Activated CD4-positive, alpha-beta memory T cell treated with anti-CD3 and anti-CD28 coated beads, Interleukin-2, amount 10 ng/mL, durations not matched to agents 7 days and 5 days (primary cell): ENCODE measurements at regions of chr16 and their contacts with region 1.

Region 1: DNA sequence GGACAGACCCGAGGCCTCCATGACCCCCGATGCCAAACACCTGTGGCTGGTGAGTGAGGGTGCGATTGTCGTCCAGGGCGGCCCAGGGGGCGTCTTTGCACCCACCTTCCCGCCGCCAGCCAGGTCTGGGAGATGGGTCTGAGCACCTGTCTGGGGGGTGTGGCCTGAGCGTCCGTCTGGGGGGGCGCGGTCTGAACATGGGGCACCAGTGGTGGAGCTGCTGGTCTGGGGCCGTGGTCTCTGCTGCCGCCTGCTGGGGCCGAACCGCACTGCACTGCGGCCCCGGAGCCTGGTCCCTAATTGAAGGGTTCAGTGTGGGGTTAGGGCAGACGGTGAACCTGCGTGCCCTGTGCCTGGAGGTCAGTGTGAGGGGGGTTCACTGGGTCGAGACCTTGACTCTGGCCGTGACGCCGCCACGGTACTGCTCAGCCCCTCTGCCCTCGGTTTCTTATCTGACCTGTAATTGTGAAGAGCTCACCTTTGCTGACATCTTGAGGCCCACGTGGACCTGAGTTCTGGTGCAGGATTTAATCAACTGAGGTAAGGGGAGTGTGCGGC is 12.6 kb upstream of the TCF25 start:
- DNase-seq: peak; percentile 79
- H3K4me3 Mint-ChIP-seq: no peak overlapping the region
- H3K27ac Mint-ChIP-seq: peak overlapping the region; percentile 0
- H3K4me1 Mint-ChIP-seq: peaks cover 34% of the 10 kb centered on the region
- H3K27me3 Mint-ChIP-seq: no peaks in the 10 kb centered on the region

Region 2: DNA sequence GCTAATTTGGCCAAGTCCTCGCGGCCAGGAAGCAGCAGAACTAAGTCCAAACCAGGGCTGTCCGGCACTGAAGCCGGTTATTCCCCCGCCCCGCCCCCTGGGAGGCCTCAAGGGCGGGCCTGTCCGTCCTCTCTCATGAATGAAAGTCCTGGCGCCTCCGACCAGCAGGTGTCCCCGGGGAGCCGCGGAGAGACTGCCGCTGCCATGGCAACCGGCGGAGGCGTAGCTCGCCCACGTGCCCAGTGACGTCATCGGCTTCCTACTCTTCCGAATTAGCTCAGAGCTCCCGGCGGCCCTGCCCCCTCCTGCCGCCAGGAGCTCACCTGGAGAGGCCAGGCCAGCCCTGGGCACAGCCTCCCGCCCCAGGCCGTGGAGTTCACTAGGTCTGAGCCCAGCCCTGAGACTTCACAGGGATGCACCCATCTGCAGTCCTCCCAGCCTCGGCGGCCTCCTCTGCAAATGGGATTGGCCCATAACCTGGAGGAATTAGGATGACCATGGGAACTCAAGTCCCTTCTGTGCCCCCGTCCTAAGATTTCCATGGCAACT is 160.7 kb before region 1 on chr16:
- CTCF ChIA-PET with region 1: interaction called, 72 read pairs
- POLR2A ChIA-PET with region 1: interaction called, 10 read pairs
- DNase-seq: peak; percentile 96
- H3K4me3 Mint-ChIP-seq: peak overlapping the region; percentile 64
- H3K27ac Mint-ChIP-seq: peak overlapping the region; percentile 58
- H3K4me1 Mint-ChIP-seq: peaks cover 37% of the 10 kb centered on the region
- H3K27me3 Mint-ChIP-seq: no peaks in the 10 kb centered on the region

Region 3: GRCh38 chr16:89720813-89721545 is 139.8 kb before region 1 on chr16 and contains the starts of genes VPS9D1 and ZNF276:
- CTCF ChIA-PET with region 1: interaction called, 7 read pairs
- POLR2A ChIA-PET with region 1: interaction called, 10 read pairs
- DNase-seq: peak; percentile 84
- H3K4me3 Mint-ChIP-seq: peak within 1 kb of the TSS; percentile 96
- H3K27ac Mint-ChIP-seq: peak within 1 kb of the TSS; percentile 100
- H3K4me1 Mint-ChIP-seq: peaks cover 40% of the 10 kb centered on the region
- H3K27me3 Mint-ChIP-seq: no peaks in the 10 kb centered on the region
- total RNA-seq, gene VPS9D1: 7.0 to 7.8 TPM
- total RNA-seq, gene ZNF276: 50.4 to 56.5 TPM

Region 4: GRCh38 chr16:89785523-89786155 is 75.2 kb before region 1 on chr16:
- CTCF ChIA-PET with region 1: interaction called, 12 read pairs
- POLR2A ChIA-PET with region 1: no interaction called
- DNase-seq: peak; percentile 52
- H3K4me3 Mint-ChIP-seq: no peak overlapping the region
- H3K27ac Mint-ChIP-seq: peak overlapping the region; percentile 69
- H3K4me1 Mint-ChIP-seq: peaks cover 28% of the 10 kb centered on the region
- H3K27me3 Mint-ChIP-seq: no peaks in the 10 kb centered on the region

Region 5: GRCh38 chr16:89815639-89816348 is 45.0 kb before region 1 on chr16:
- CTCF ChIA-PET with region 1: interaction called, 12 read pairs
- POLR2A ChIA-PET with region 1: interaction called, 8 read pairs
- DNase-seq: no peak
- H3K4me3 Mint-ChIP-seq: peak overlapping the region; percentile 91
- H3K27ac Mint-ChIP-seq: peak overlapping the region; percentile 69
- H3K4me1 Mint-ChIP-seq: peaks cover 45% of the 10 kb centered on the region
- H3K27me3 Mint-ChIP-seq: no peaks in the 10 kb centered on the region

Region 6: DNA sequence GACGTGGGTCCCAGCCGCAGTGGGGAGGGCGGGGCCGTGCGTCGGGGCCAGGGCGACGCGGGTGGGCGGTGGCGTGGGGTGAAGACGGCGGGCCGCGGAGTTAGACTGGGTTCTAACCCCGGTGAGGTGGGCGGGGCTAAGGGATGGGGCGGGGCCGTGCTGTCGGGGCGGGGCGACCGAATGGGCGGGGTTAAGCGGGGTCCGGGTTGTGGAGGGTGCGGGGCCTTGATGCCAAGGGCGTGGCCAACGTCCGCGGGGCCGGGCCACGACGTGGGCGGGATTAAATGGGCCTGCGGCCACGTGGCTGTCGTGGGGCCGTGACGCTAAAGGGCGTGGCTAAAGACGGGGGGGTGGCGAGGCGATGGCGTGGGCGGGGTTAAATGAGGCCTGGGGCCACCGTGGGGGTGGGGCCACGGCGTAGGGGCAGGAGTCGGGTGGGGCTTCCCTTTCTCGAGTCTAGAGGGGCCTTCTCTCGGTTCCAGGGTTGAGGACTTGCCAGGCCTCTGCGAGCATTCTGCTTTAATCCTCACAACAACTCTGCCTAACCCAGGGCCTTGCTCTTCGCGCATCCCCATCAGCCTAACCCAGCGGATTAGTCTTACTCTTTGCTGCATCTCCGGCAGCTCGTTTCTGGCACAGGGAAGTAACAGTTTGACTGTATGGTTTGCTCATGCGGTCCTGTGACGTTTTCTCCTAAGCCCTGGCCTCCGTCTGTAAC is 13.3 kb after region 1 on chr16:
- CTCF ChIA-PET with region 1: interaction called, 38 read pairs
- POLR2A ChIA-PET with region 1: interaction called, 117 read pairs
- DNase-seq: peak; percentile 94
- H3K4me3 Mint-ChIP-seq: peak overlapping the region; percentile 85
- H3K27ac Mint-ChIP-seq: peak overlapping the region; percentile 98
- H3K4me1 Mint-ChIP-seq: peaks cover 17% of the 10 kb centered on the region
- H3K27me3 Mint-ChIP-seq: no peaks in the 10 kb centered on the region

Region 7: DNA sequence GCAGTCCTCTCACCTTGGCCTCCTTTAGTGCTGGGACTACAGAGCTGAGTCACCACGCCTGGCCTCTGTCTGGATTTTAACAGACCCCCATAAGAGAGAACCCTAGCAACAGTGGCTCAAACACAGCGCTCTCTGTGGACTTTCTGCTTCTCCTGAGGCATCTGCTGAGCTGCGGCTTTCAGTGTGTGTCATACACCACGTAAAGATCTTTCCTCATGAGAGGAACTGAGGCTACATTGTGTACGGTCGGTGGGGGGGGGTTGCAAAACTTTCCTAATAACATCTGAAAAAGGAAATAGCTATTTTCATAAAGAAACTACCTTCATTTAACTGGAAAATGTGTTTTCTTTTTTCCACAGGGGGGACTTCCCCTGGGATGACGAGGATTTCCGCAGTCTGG is 120.6 kb after region 1 on chr16:
- CTCF ChIA-PET with region 1: no interaction called
- POLR2A ChIA-PET with region 1: no interaction called
- DNase-seq: no peak
- H3K4me3 Mint-ChIP-seq: no peak overlapping the region
- H3K27ac Mint-ChIP-seq: peak overlapping the region; percentile 29
- H3K4me1 Mint-ChIP-seq: peaks cover 19% of the 10 kb centered on the region
- H3K27me3 Mint-ChIP-seq: no peaks in the 10 kb centered on the region

Region 8: GRCh38 chr16:90008708-90009535 is 148.1 kb after region 1 on chr16:
- CTCF ChIA-PET with region 1: no interaction called
- POLR2A ChIA-PET with region 1: no interaction called
- DNase-seq: peak; percentile 64
- H3K4me3 Mint-ChIP-seq: no peak overlapping the region
- H3K27ac Mint-ChIP-seq: no peak overlapping the region
- H3K4me1 Mint-ChIP-seq: peaks cover 12% of the 10 kb centered on the region
- H3K27me3 Mint-ChIP-seq: peaks cover 7% of the 10 kb centered on the region